Endothelial cell of umbilical vein (primary cell): ENCODE measurements at regions of chr14 and their contacts with region 1.

Region 1: DNA sequence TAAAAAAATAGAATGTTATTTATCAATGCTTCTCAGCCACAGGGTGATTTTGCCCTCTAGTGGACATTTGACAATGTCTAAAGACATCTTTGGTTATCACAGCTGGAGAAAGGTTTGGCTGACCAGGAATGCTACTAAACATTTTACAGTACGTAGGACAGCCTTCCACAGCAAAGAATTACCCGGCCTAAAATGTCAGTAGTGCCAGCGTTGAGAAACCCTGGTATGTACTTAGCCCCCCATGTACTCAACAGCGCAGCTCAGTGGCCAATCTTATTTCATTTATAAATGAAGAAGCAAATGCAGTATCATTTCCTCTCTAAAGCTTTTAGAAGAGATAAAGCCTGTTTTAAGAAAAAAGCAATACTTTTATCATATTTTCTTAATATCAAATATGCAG is 5.8 kb downstream of the MARK3 start:
- DNase-seq: peak; percentile 80
- H3K4me3 ChIP-seq: no peak overlapping the region
- H3K27ac ChIP-seq: no peak overlapping the region
- H3K4me1 ChIP-seq: peaks cover 37% of the 10 kb centered on the region
- H3K27me3 ChIP-seq: no peaks in the 10 kb centered on the region
- CTCF ChIP-seq: peak; percentile 49 to 64
- POLR2A ChIP-seq: no peak

Region 2: DNA sequence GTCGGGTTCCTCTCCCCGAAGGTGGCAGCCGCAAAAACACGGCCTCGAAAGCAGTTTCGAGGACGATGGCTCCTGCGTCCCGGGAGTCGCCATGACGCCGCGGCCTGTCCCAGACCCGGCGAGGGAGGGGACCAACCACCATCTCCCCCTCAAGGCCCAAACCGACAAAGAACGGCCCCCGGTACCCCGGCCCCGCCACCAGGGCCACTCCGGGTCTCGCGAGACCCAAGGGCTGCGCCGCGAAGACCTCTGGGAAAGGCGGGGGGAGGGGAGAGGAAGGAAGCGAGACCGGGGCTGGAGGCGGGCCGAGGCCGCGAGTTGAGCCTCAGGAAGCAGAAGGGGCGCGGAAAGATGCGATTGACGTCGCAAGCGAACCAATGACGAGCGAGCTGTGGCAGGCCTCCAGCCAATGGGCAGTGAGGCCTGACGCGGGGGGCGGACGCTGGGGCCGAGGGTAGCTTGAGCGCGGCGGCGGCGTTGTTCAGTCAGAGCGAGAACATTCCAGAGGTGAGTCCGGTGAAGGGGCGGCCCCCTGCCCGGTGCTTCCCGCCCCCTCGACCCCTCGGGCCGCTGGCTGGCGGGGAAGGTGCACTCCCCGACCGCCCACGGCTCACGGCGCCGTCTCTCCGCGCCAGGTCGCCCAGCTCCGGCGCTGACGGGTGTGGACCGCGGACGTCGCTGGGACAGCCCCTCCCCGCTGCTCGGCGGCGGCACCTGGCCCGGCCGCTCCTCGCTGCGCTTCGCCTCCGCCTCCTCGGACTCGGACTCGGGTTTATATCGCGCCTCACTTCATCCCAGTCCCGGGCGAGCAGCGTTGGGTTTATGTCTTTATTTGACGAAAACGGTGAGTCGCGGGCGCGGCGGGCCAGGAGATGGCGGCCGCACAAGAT is 57.0 kb before region 1 on chr14 and contains the start of gene EIF5:
- CTCF ChIA-PET with region 1: interaction called, 30 read pairs
- POLR2A ChIA-PET with region 1: interaction called, 4 read pairs
- dilution Hi-C with region 1: no loop called
- intact Hi-C with region 1: no loop called
- DNase-seq: peak; percentile 99
- H3K4me3 ChIP-seq: peak within 1 kb of the TSS; percentile 59 to 99 (median 78)
- H3K27ac ChIP-seq: peak within 1 kb of the TSS; percentile 93
- H3K4me1 ChIP-seq: peaks cover 12% of the 10 kb centered on the region
- H3K27me3 ChIP-seq: peaks cover 0 to 6% of the 10 kb centered on the region in 2 experiments
- CTCF ChIP-seq: no peak
- POLR2A ChIP-seq: peak; percentile 99
- total RNA-seq, gene EIF5: 294 and 313 TPM in 2 replicates

Region 3: GRCh38 chr14:103356024-103356682 is 34.9 kb before region 1 on chr14:
- CTCF ChIA-PET with region 1: interaction called, 11 read pairs
- POLR2A ChIA-PET with region 1: no interaction called
- dilution Hi-C with region 1: no loop called
- intact Hi-C with region 1: no loop called
- DNase-seq: no peak
- H3K4me3 ChIP-seq: no peak overlapping the region
- H3K27ac ChIP-seq: no peak overlapping the region
- H3K4me1 ChIP-seq: no peaks in the 10 kb centered on the region
- H3K27me3 ChIP-seq: no peaks in the 10 kb centered on the region
- CTCF ChIP-seq: no peak
- POLR2A ChIP-seq: no peak

Region 4: GRCh38 chr14:103378038-103378854 is 12.8 kb before region 1 on chr14:
- CTCF ChIA-PET with region 1: interaction called, 13 read pairs
- POLR2A ChIA-PET with region 1: interaction called, 3 read pairs
- dilution Hi-C with region 1: no loop called
- intact Hi-C with region 1: no loop called
- DNase-seq: no peak
- H3K4me3 ChIP-seq: no peak overlapping the region
- H3K27ac ChIP-seq: no peak overlapping the region
- H3K4me1 ChIP-seq: no peaks in the 10 kb centered on the region
- H3K27me3 ChIP-seq: peaks cover 0 to 5% of the 10 kb centered on the region in 2 experiments
- CTCF ChIP-seq: no peak
- POLR2A ChIP-seq: no peak

Region 5: DNA sequence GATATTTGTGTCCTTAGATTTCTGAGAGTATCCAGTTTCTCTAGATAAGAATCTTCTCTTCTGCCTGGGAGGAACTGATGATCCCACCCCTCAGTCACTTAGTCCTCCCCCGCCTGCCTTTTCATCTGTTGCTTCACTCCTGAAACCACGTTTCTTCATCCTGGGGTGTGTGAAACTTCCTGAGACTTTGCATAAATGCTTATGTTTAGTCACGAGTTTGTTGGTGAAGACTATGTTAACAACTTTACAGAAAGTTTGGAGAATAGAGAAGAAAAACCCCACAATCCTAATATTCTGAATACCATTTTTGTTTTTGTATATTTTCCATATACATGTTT is 27.4 kb after region 1 on chr14:
- CTCF ChIA-PET with region 1: interaction called, 11 read pairs
- POLR2A ChIA-PET with region 1: no interaction called
- dilution Hi-C with region 1: no loop called
- intact Hi-C with region 1: no loop called
- DNase-seq: no peak
- H3K4me3 ChIP-seq: no peak overlapping the region
- H3K27ac ChIP-seq: no peak overlapping the region
- H3K4me1 ChIP-seq: peaks cover 5% of the 10 kb centered on the region
- H3K27me3 ChIP-seq: no peaks in the 10 kb centered on the region
- CTCF ChIP-seq: no peak
- POLR2A ChIP-seq: no peak

Region 6: DNA sequence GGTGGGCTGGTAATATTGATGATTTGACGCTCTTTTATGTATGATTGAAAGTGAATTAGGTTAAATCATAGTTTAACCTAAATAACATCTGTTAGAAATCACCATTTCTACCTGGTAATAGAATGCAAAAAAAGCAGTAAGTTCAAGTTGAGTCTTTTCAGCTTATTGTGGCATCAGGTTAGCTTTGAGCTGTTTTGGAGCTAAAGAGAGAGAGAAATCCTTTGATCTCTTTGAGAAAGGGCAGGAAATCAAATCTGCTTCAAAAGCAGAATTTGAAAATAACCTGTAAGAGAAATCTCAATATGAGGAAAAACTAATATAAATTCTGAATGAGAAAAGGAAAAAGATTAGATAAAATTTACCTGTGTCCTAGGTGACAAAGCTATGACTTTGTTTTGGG is 69.4 kb after region 1 on chr14:
- CTCF ChIA-PET with region 1: interaction called, 10 read pairs
- POLR2A ChIA-PET with region 1: no interaction called
- dilution Hi-C with region 1: no loop called
- intact Hi-C with region 1: no loop called
- DNase-seq: no peak
- H3K4me3 ChIP-seq: no peak overlapping the region
- H3K27ac ChIP-seq: no peak overlapping the region
- H3K4me1 ChIP-seq: peaks cover 19% of the 10 kb centered on the region
- H3K27me3 ChIP-seq: no peaks in the 10 kb centered on the region
- CTCF ChIP-seq: no peak
- POLR2A ChIP-seq: no peak